Right lobe of liver (tissue), 6 donors: ENCODE measurements at regions of chr6 and their contacts with region 1.

Region 1: DNA sequence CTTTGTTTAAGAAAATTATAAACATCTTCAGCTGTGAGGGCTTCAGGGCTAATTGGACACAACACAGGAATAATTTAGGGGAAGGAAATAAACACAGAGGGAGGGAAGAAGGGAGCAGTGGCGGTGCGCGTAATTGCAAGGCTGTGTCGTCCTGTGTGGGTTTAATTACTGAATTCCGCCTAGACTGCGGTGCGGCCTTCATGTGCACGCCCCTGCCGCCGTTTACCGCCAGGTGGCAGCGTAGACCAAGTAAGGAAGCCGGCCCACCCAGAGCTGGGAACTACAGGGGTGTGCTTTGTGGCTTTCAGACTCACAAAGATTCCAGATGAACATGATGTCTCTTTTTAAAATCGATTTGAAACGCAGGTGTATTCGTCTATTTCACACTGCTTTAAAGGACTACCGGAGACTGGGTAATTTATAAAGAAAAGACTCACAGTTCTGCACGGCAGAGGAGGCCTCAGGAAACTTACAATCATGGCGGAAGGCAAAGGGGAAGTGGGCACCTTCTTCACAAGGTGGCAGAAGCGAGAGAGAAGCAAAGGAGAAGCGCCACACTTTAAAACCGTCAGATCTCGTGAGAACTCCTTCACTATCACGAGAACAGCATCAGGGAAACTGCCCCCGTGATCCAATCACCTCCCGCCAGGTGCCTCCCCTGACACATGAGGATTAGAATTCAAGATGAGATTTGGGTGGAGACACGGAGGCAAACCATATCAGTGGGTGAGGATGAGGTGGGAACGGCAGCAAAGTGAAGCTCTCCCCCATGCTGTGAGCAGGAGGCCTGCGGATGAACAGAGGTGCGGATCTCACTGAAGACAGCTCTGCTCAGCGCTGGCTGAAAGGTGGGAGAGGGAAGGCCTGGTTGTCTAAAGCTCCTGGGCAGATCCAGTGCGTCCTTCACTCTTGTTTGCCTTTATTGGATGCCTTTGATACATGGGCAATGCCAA is 222.0 kb upstream of the PDE10A start:
- DNase-seq: peak; percentile 64 to 71 (median 71)
- ATAC-seq: peak; percentile 82 to 88 (median 85)
- H3K4me3 ChIP-seq: no peak overlapping the region
- H3K27ac ChIP-seq: no peak overlapping the region
- H3K4me1 ChIP-seq: no peaks in the 10 kb centered on the region
- H3K27me3 ChIP-seq: no peaks in the 10 kb centered on the region
- CTCF ChIP-seq: peak; percentile 49 to 88 (median 73)
- POLR2A ChIP-seq: no peak

Region 2: GRCh38 chr6:166106076-166106686 is 221.1 kb after region 1 on chr6:
- intact Hi-C with region 1: loop called (anchors 5 to 10 kb)
- DNase-seq: peak in 2 of 3 donors; percentile 43 to 66
- ATAC-seq: peak; percentile 65 to 85 (median 74)
- H3K4me3 ChIP-seq: no peak overlapping the region
- H3K27ac ChIP-seq: no peak overlapping the region
- H3K4me1 ChIP-seq: no peaks in the 10 kb centered on the region
- H3K27me3 ChIP-seq: no peaks in the 10 kb centered on the region
- CTCF ChIP-seq: peak; percentile 71 to 84 (median 76)
- POLR2A ChIP-seq: no peak